Naive thymus-derived CD8-positive, alpha-beta T cell (primary cell): ENCODE measurements at regions of chr17 and their contacts with region 1.

Region 1: DNA sequence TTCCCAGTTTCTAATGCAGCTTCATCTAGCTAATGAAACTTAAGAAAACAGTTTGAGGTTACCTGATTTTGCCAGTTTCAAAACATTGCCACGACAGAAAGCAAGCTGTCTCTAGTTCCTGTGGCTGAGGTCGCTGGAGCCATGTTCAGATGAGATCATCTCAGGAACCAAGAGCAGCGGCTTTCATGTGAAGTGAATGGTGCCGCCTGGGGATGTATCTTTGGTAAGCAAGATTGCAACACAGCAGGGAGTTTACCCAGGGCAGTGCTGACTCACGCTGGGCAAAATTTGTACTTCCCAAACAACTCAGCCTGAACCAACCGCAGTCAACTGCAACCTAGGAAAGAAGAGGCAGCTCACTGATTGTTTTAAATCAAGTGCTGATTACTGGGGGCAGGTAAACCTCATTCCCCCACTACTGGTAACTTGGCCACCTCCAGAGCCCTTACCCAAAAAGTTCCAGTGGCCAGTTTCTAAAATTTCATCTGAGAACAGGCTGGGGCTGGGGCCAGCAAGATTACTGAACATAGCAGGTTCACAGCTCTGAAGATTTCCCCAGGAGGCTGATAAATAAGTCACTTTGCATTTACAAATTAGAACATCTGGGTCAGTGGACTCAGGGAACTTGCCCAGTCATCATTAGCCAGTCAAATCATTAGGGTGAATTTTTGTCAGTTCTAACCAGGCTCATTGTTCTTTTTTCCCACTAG is at the start of gene RFFL:
- DNase-seq: peak; percentile 54 to 91 (median 80)
- ATAC-seq: peak; percentile 98 to 99
- H3K4me3 Mint-ChIP-seq: peak within 1 kb of the TSS; percentile 59 to 86 (median 78)
- H3K27ac Mint-ChIP-seq: peak within 1 kb of the TSS; percentile 46 to 98 (median 94)
- H3K4me1 Mint-ChIP-seq: peaks cover 21 to 63% (median 56%) of the 10 kb centered on the region in 4 donors
- H3K27me3 Mint-ChIP-seq: no peaks in the 10 kb centered on the region
- polyA plus RNA-seq, gene RFFL: 30.8 to 39.7 (median 31.9) TPM

Region 2: DNA sequence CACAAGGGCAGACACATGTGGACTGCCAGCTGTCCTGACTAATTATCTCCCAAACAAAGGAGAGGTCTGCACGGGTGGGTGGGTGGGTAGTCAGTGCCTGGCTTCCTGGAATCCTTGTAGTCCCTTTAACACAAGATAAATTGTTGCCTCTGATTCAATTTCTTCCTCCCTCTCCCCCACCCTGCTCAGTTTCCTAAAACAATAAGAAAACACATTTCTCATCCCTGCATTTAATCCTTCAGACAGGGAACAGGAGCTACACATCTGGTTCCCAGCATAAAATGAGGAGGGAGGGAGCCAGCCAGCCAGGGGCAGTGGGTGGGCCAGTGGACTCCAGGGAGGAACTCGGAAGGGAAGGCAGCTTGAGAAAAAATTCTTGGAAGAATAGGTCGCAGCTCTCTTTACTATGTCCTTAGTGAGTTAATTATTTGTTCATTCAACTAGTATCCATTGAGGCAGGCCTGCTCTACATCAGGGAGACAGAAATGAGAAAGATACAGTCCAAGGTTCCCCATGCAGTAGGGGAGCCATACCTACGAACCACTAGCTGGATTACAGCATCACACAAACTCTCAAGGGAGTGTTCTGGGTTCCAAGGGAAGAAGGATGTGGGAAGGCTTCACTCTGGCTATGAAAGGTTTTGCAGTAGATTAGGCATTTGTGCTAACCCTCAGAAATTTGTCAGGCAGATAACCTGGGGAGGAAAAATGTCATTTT is 160.7 kb before region 1 on chr17:
- POLR2A ChIA-PET with region 1: no interaction called
- DNase-seq: no peak
- ATAC-seq: no peak
- H3K4me3 Mint-ChIP-seq: no peak overlapping the region
- H3K27ac Mint-ChIP-seq: no peak overlapping the region
- H3K4me1 Mint-ChIP-seq: no peaks in the 10 kb centered on the region
- H3K27me3 Mint-ChIP-seq: peaks cover 4 to 28% (median 9%) of the 10 kb centered on the region in 5 donors

Region 3: GRCh38 chr17:34980681-34981537 is 82.8 kb before region 1 on chr17:
- POLR2A ChIA-PET with region 1: interaction called, 12 read pairs
- DNase-seq: peak in 9 of 10 donors; percentile 65 to 86 (median 73)
- ATAC-seq: peak; percentile 82 to 84
- H3K4me3 Mint-ChIP-seq: peak overlapping the region; percentile 86 to 97 (median 92)
- H3K27ac Mint-ChIP-seq: peak overlapping the region; percentile 92 to 99 (median 98)
- H3K4me1 Mint-ChIP-seq: peaks cover 30 to 53% (median 53%) of the 10 kb centered on the region in 4 donors
- H3K27me3 Mint-ChIP-seq: no peaks in the 10 kb centered on the region

Region 4: DNA sequence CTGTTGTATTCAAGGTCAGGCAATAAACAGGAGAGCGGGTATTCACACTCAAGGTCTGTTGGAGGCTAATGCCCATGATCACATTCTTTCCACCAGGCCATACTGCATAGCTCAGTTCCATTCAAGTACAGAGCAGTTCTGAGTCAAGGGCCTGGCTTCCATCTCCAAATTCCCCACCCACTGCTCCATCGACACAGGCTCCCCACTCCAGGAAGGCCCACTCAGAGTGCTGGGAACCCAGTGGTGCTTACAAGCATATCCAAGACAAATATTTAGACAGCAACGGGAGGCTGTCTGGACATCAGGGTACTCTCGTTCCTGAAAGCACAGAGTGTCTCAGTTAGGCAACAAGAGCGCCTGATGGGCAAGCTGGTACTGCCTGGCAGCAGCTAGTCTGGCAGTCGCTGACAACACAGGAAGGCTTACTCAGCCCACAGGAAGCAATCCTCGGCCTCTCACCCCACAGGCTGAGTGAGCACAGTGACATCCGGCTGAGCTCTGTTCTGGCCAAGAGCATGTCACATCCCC is 41.1 kb before region 1 on chr17:
- POLR2A ChIA-PET with region 1: interaction called, 39 read pairs
- DNase-seq: peak; percentile 23 to 77 (median 50)
- ATAC-seq: peak; percentile 98 to 100
- H3K4me3 Mint-ChIP-seq: peak overlapping the region; percentile 36 to 79 (median 68)
- H3K27ac Mint-ChIP-seq: peak overlapping the region; percentile 94 to 99 (median 96)
- H3K4me1 Mint-ChIP-seq: peaks cover 15 to 60% (median 50%) of the 10 kb centered on the region in 4 donors
- H3K27me3 Mint-ChIP-seq: no peaks in the 10 kb centered on the region

Region 5: GRCh38 chr17:35052241-35052610 is 11.4 kb before region 1 on chr17:
- POLR2A ChIA-PET with region 1: interaction called, 41 read pairs
- DNase-seq: no peak
- ATAC-seq: no peak
- H3K4me3 Mint-ChIP-seq: peak overlapping the region; percentile 42 to 86 (median 74)
- H3K27ac Mint-ChIP-seq: peak overlapping the region; percentile 92 to 99 (median 94)
- H3K4me1 Mint-ChIP-seq: peaks cover 41 to 85% (median 75%) of the 10 kb centered on the region in 4 donors
- H3K27me3 Mint-ChIP-seq: no peaks in the 10 kb centered on the region

Region 6: DNA sequence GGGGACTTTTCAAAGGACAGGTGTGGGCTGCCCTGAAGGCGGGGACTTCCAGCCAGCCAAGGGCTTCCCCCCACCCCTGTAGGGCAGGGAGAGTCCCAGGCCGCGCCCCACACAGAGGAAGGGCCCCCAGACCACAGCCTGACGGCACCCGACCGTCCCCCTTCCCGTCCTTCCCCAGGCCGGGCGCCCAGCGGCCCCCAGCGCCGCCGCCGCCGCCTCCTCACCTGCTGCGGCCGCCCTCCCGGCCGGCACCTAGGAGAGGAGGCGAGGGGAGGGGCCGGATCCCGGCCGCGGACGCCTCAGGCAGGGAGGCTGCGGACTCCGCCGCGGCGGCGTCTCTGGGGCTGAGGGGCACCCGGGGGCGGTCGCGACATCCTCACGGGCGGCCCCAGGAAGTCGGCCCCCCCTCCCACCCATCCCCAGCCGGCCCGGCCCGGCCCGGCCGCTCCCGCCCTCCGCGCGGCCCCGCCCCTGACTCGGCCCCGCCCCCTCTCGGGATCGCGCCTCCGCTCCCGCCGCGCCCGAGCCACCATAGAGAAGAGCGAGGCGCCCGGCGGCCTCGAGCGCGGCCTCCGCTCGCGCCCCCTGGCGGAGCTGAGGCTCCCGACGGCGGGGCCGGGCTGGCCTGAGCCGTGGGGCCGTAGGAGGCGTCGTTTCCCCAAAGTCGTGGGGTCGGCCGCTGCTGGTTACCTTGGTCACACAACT is 25.4 kb after region 1 on chr17:
- POLR2A ChIA-PET with region 1: interaction called, 27 read pairs
- DNase-seq: peak; percentile 82 to 96 (median 90)
- ATAC-seq: peak; percentile 79 to 84
- H3K4me3 Mint-ChIP-seq: peak overlapping the region; percentile 90 to 98 (median 94)
- H3K27ac Mint-ChIP-seq: peak overlapping the region; percentile 95 to 98 (median 96)
- H3K4me1 Mint-ChIP-seq: peaks cover 10 to 53% (median 40%) of the 10 kb centered on the region in 4 donors
- H3K27me3 Mint-ChIP-seq: no peaks in the 10 kb centered on the region